K562 (cell line): ENCODE measurements at regions of chr7 and their contacts with region 1.

Region 1: GRCh38 chr7:50418086-50418515 is 32.0 kb downstream of the FIGNL1 start:
- DNase-seq: peak; percentile 75 to 90 (median 79)
- ATAC-seq: peak; percentile 100
- H3K4me3 ChIP-seq: no peak overlapping the region
- H3K27ac ChIP-seq: no peak overlapping the region
- H3K4me1 ChIP-seq: peaks cover 0 to 2% of the 10 kb centered on the region in 2 experiments; a peak in 1 of 5 replicates
- H3K27me3 ChIP-seq: 0 out of 5 replicates have a peak, but pooled peaks cover 0 to 2% of the 10 kb centered on the region in 2 experiments
- CTCF ChIP-seq: peak; percentile 98 to 99 (median 99)
- EP300 ChIP-seq: no peak
- POLR2A ChIP-seq: no peak
- RAD21 ChIP-seq: peak; percentile 94 to 98

Region 2: DNA sequence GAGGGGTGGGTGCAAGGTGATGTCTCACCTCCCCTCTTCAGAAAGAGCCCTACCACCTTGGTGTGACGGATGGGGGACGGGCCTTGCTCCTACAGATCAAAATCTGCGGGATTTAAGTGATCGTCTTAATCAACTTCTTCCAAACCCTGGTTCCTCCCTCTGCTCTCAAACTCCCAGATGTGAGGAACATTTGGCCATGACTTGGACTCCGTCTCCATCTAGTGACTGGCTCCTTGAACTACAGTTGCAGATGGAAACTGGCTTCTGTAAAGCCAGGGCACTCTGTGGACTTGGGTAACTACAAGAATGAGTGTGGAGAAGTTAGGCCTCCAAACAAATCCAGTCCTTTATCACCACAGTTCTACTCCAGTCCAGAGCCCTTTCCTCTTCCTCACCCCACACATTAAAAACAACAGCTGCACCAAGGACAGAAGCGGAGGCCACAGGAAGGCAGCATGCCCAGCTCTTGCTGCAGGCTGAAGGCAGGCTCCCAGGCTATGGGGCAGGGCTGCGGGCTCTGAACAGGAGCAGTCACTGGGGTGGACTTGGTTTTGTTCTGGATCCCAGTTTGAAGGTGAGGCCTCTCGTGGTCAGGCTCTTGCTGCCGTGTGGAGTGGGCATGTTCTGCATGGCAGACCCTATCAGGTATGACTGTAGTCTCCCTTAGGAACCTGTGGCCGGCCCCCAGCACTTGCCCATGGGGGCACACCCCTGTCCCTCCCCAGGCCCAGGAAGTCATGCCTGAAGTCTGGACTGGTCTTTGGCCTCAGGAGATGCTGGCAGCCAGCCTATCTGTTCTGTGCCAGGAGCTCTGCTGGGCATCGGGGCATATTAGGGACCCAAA is 565.3 kb before region 1 on chr7:
- CTCF ChIA-PET with region 1: no interaction called
- POLR2A ChIA-PET with region 1: no interaction called
- in situ Hi-C with region 1: no loop called
- intact Hi-C with region 1: loop called (anchors 10 kb)
- DNase-seq: peak; percentile 23 to 46 (median 35)
- ATAC-seq: peak; percentile 78
- H3K4me3 ChIP-seq: no peak overlapping the region
- H3K27ac ChIP-seq: no peak overlapping the region
- H3K4me1 ChIP-seq: no peaks in the 10 kb centered on the region
- H3K27me3 ChIP-seq: no peaks in the 10 kb centered on the region
- CTCF ChIP-seq: peak; percentile 55 to 70 (median 69)
- EP300 ChIP-seq: no peak
- POLR2A ChIP-seq: no peak
- RAD21 ChIP-seq: peak; percentile 48 to 80

Region 3: GRCh38 chr7:50119815-50120637 is 298.1 kb before region 1 on chr7:
- CTCF ChIA-PET with region 1: interaction called, 5 read pairs
- POLR2A ChIA-PET with region 1: no interaction called
- in situ Hi-C with region 1: no loop called
- intact Hi-C with region 1: loop called (anchors 1 kb)
- DNase-seq: peak; percentile 25 to 57 (median 40)
- ATAC-seq: peak; percentile 98
- H3K4me3 ChIP-seq: no peak overlapping the region
- H3K27ac ChIP-seq: no peak overlapping the region
- H3K4me1 ChIP-seq: no peaks in the 10 kb centered on the region
- H3K27me3 ChIP-seq: no peaks in the 10 kb centered on the region
- CTCF ChIP-seq: peak; percentile 70 to 86 (median 74)
- EP300 ChIP-seq: no peak
- POLR2A ChIP-seq: no peak; the same call in 1 of the 2 replicates
- RAD21 ChIP-seq: peak; percentile 56 to 77

Region 4: GRCh38 chr7:50206453-50207250 is 211.4 kb before region 1 on chr7:
- CTCF ChIA-PET with region 1: interaction called, 12 read pairs
- POLR2A ChIA-PET with region 1: no interaction called
- in situ Hi-C with region 1: no loop called
- intact Hi-C with region 1: loop called (anchors 1 kb)
- DNase-seq: no peak
- ATAC-seq: no peak
- H3K4me3 ChIP-seq: no peak overlapping the region
- H3K27ac ChIP-seq: no peak overlapping the region
- H3K4me1 ChIP-seq: peaks cover 8 to 10% of the 10 kb centered on the region in 2 experiments
- H3K27me3 ChIP-seq: no peaks in the 10 kb centered on the region; a peak in 1 of 5 replicates
- CTCF ChIP-seq: no peak
- EP300 ChIP-seq: no peak
- POLR2A ChIP-seq: no peak
- RAD21 ChIP-seq: no peak

Region 5: DNA sequence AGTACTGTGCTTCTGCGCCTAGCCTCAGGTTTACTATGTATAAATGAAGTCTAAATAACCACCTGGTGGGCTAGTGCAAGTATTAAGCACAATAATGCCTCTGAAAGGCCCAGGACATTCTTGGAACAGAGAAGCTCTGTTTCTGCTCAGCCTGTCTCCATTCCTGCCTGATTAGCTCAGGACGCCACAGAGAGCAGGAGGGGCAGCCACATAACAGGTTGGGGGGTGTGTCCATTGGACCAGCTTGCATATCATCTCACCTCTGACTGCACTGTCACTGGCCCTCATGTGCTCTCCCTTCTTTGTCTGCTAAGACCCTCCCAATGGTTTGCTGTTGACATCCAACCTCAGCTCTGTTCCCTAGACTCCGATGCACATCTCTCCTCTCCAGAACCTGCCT is 166.3 kb before region 1 on chr7:
- CTCF ChIA-PET with region 1: no interaction called
- POLR2A ChIA-PET with region 1: no interaction called
- in situ Hi-C with region 1: no loop called
- intact Hi-C with region 1: no loop called
- DNase-seq: no peak
- ATAC-seq: peak; percentile 69
- H3K4me3 ChIP-seq: no peak overlapping the region
- H3K27ac ChIP-seq: no peak overlapping the region
- H3K4me1 ChIP-seq: no peaks in the 10 kb centered on the region
- H3K27me3 ChIP-seq: no peaks in the 10 kb centered on the region
- CTCF ChIP-seq: no peak
- EP300 ChIP-seq: no peak
- POLR2A ChIP-seq: no peak
- RAD21 ChIP-seq: no peak

Region 6: DNA sequence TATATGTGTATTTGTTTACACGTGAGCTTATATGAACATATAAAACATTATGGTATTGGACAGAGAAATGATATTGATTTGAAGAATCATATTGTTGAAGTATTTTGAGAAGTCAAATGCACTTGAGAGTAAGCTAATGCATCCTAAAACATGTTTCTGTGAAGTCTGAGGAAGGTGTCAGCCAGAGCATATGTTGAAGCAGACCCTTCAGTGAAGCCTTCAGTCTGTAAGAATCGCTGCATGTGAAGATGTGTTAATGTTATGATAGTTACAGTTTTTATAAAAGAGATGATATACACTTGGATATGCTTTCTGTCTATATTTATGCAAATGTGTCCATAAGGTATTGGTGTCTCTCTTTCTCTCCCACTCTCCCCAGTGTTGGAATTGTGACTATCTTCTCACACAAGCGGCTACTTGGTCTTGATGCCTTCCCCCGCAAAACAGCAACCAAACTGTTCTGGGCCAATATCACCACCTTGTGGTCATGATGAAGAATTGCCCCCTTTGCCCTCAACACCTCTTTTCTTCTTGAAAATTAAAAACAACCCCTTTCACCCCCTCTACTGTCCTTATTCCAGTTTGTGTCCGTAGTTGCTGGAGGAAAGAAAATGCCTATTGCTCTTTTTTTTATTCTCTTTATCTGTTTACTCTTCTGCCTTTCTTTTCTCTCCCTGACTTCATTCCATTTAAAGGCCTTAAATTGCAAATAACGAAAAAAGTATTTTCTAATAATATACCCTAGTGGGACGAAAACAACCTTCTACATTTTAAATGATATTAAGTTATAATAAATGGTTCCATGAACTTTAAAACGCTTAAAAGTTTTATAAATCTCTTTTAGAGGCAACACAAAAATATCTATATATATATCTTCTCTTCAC is 48.7 kb before region 1 on chr7:
- CTCF ChIA-PET with region 1: interaction called, 3 read pairs
- POLR2A ChIA-PET with region 1: no interaction called
- in situ Hi-C with region 1: no loop called
- intact Hi-C with region 1: loop called (anchors 5 kb)
- DNase-seq: peak; percentile 70 to 88 (median 71)
- ATAC-seq: peak; percentile 90
- H3K4me3 ChIP-seq: no peak overlapping the region
- H3K27ac ChIP-seq: no peak overlapping the region
- H3K4me1 ChIP-seq: peaks cover 0 to 2% of the 10 kb centered on the region in 2 experiments; a peak in 1 of 5 replicates
- H3K27me3 ChIP-seq: no peaks in the 10 kb centered on the region
- CTCF ChIP-seq: peak; percentile 89 to 95 (median 92)
- EP300 ChIP-seq: no peak
- POLR2A ChIP-seq: no peak
- RAD21 ChIP-seq: peak; percentile 96 to 98